ENCODE measurements at regions of chr19 and their contacts with region 1.

Region 1: GRCh38 chr19:51986309-51987291 is at the start of gene ZNF350:
- DNase-seq: peak; percentile 74 to 96 (median 88)
- ATAC-seq: peak; percentile 99
- H3K4me3 ChIP-seq: peak within 1 kb of the TSS; percentile 85 to 92
- H3K4me3 Mint-ChIP-seq: peak within 1 kb of the TSS; percentile 96
- H3K27ac ChIP-seq: peak within 1 kb of the TSS; percentile 71 to 77
- H3K27ac Mint-ChIP-seq: peak within 1 kb of the TSS; percentile 95
- H3K4me1 ChIP-seq: peaks cover 5% of the 10 kb centered on the region
- H3K4me1 Mint-ChIP-seq: peaks cover 21% of the 10 kb centered on the region
- H3K27me3 ChIP-seq: no peaks in the 10 kb centered on the region
- H3K27me3 Mint-ChIP-seq: no peaks in the 10 kb centered on the region
- CTCF ChIP-seq: no peak
- total RNA-seq, gene ZNF350: 48.1 to 50.8 TPM

Region 2: DNA sequence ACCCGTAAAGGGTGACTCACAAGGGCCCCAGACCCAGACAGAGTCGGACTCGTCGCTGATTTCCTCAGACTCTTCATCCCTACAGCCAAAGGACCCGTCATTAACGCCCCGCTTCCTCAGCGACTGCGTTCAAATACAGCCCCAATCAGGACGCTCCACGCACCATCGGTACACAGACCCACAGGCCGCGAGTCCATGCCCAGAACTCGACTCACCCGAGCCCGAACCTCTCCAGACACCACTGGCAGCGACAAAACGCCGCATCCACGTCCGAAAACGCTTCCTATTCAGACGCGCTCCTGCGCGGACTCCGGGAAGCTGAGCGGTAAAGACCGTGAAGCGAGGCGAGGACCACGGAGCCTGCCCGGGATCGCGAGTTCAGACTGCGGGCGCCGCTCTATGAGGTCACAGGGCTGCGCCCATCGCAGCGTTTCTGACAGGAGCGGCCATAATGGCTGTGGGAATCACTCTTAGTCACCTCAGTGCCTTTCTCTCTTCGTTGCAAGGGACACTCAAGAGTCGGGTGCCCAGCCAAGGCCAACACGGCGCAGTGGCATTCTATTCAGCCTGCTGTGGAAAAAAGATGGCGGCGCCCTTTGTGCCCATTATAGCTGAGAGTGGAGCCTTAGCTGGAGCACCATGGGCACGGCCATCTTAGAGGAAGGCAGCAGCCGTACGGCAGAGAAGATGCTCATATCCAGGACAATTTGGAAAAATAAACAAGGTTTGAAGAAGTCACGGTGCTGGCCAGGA is 41.6 kb after region 1 on chr19 and contains the start of gene ZNF614:
- CTCF ChIA-PET with region 1: no interaction called
- POLR2A ChIA-PET with region 1: no interaction called
- intact Hi-C with region 1: loop called (anchors 1 kb)
- DNase-seq: peak; percentile 74 to 92 (median 85)
- ATAC-seq: peak; percentile 86
- H3K4me3 ChIP-seq: peak within 1 kb of the TSS; percentile 92 to 93
- H3K4me3 Mint-ChIP-seq: peak within 1 kb of the TSS; percentile 98
- H3K27ac ChIP-seq: peak within 1 kb of the TSS; percentile 93 to 94
- H3K27ac Mint-ChIP-seq: peak within 1 kb of the TSS; percentile 99
- H3K4me1 ChIP-seq: peaks cover 10% of the 10 kb centered on the region
- H3K4me1 Mint-ChIP-seq: peaks cover 30% of the 10 kb centered on the region
- H3K27me3 ChIP-seq: no peaks in the 10 kb centered on the region
- H3K27me3 Mint-ChIP-seq: no peaks in the 10 kb centered on the region
- CTCF ChIP-seq: no peak
- total RNA-seq, gene ZNF614: 10.6 to 11.4 TPM